Activated naive CD4-positive, alpha-beta T cell treated with anti-CD3 and anti-CD28 coated beads for 36 hours (primary cell): ENCODE measurements at regions of chr3 and their contacts with region 1.

Region 1: DNA sequence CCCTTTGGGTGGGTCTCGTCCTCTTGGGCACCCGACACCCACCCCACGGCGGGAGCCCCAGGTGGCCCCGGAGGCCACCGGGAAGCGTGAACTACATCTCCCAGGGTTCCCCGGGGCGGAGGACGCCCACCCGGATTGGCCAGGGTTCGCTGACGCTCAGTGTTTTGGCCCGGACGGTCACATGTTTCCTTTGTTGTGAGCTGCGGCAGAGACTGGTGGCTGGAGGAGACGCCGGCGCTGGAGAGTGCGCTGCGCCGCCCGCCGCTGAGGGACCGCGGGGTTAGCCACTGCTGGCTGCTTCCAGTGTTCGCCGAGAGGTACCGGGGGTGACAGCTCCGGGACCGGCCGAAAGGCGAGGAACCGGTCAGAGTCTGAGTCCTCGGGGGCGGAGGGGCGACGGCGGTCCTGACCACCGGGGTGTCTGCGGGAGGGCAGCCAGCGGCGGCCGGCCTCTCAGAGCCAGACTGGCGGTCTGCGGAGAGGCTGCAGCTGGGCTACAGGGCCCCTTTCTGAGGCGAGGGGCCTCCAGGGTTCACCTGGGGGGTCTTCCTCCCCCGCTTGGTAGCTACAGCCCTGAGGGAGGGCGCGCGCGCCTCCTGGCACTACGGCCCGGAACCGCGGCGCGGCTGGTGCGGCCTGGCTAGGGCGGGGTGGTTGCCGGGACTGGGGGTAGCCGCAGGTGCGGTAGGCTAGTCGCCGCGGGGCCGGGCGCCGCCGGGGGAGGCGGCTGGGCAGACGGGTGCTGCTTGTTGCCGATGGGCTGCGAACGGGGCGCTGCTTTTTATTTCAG is at the start of gene KLHL24:
- DNase-seq: peak; percentile 95
- H3K4me3 Mint-ChIP-seq: peak within 1 kb of the TSS; percentile 91
- H3K27ac Mint-ChIP-seq: peak within 1 kb of the TSS; percentile 93
- H3K4me1 Mint-ChIP-seq: peaks cover 40% of the 10 kb centered on the region
- H3K27me3 Mint-ChIP-seq: no peaks in the 10 kb centered on the region
- total RNA-seq, gene KLHL24: 26.2 to 26.9 TPM

Region 2: DNA sequence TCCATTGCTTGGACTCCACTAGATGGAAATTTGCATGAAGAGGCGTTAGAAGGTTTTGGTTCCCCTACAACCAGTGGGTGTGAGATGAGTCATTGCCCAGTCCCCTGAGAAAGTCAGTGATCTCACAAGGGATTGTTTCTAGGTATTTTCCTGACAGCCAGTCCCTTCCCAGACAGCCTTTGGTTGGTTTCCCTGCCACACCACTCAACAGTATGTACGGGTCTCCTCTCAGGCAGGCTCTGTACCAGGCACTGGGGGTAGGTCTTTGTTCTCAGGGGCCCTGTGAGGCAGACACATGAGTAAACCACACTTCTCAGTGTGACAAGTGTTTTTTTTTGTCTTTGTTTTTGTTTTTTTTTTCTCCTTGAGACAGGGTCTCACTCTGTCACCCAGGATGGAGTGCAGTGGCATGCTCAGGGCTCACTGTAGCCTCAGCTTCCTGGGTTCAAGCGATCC is 477.0 kb before region 1 on chr3:
- CTCF ChIA-PET with region 1: no interaction called
- intact Hi-C with region 1: loop called (anchors 5 kb)
- DNase-seq: peak; percentile 80
- H3K4me3 Mint-ChIP-seq: peak overlapping the region; percentile 19
- H3K27ac Mint-ChIP-seq: peak overlapping the region; percentile 74
- H3K4me1 Mint-ChIP-seq: peaks cover 41% of the 10 kb centered on the region
- H3K27me3 Mint-ChIP-seq: no peaks in the 10 kb centered on the region

Region 3: GRCh38 chr3:183427876-183428446 is 207.7 kb before region 1 on chr3:
- CTCF ChIA-PET with region 1: no interaction called
- intact Hi-C with region 1: loop called (anchors 1 kb)
- DNase-seq: peak; percentile 40
- H3K4me3 Mint-ChIP-seq: peak overlapping the region; percentile 79
- H3K27ac Mint-ChIP-seq: no peak overlapping the region
- H3K4me1 Mint-ChIP-seq: peaks cover 27% of the 10 kb centered on the region
- H3K27me3 Mint-ChIP-seq: peaks cover 14% of the 10 kb centered on the region

Region 4: DNA sequence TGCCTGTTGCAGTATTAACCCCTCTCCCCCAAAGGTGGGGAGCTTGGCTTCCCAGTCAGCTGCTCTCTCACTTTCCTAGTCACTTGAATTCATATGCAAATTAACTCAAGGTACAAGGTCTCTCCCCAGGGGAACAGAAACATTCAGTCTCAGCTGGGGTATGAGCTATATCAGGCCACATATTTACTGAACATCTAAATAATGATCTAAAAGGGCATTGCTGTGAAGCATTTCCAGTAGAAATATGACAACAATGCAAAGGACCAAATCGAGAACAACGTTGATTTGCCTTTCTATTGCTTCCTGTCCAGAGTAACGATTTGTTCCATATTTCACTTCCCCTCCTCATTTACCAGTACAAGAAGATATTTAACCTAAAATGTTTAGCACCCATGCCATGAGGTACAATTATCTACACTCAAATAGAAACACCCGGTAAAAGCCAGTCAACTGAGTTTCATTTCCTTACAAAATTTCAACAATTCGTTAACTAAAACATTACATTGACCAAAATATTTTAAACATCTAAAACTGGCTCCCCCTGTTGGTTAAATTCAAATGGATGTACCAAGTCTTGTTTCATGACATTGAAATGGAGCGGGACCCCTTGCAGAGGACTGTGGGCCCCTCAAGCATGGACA is 43.6 kb before region 1 on chr3:
- CTCF ChIA-PET with region 1: interaction called, 4 read pairs
- intact Hi-C with region 1: loop called (anchors 1 kb)
- DNase-seq: peak; percentile 19
- H3K4me3 Mint-ChIP-seq: peak overlapping the region; percentile 37
- H3K27ac Mint-ChIP-seq: peak overlapping the region; percentile 86
- H3K4me1 Mint-ChIP-seq: peaks cover 48% of the 10 kb centered on the region
- H3K27me3 Mint-ChIP-seq: no peaks in the 10 kb centered on the region

Region 5: DNA sequence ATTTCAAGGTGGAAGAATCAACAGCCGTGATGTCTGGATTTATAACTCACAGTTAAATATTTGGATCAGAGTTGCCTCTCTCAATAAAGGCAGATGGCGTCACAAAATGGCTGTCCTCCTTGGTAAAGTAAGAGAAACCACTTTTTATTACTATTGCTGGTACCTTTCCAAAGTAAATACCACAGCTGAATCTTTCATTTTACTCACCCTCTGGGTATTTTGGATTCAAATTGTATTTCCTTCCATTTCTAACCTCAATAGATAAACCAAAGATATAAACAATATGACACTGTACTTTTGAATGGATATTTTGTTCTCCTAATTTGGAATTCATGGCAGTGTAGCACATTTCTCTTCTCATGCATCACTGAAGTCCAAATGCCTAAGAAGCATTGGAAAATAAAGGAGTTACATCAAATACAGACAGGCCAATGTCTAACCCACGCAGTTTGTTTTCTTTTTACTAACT is 29.3 kb after region 1 on chr3:
- CTCF ChIA-PET with region 1: no interaction called
- intact Hi-C with region 1: no loop called
- DNase-seq: no peak
- H3K4me3 Mint-ChIP-seq: no peak overlapping the region
- H3K27ac Mint-ChIP-seq: no peak overlapping the region
- H3K4me1 Mint-ChIP-seq: peaks cover 14% of the 10 kb centered on the region
- H3K27me3 Mint-ChIP-seq: no peaks in the 10 kb centered on the region

Region 6: DNA sequence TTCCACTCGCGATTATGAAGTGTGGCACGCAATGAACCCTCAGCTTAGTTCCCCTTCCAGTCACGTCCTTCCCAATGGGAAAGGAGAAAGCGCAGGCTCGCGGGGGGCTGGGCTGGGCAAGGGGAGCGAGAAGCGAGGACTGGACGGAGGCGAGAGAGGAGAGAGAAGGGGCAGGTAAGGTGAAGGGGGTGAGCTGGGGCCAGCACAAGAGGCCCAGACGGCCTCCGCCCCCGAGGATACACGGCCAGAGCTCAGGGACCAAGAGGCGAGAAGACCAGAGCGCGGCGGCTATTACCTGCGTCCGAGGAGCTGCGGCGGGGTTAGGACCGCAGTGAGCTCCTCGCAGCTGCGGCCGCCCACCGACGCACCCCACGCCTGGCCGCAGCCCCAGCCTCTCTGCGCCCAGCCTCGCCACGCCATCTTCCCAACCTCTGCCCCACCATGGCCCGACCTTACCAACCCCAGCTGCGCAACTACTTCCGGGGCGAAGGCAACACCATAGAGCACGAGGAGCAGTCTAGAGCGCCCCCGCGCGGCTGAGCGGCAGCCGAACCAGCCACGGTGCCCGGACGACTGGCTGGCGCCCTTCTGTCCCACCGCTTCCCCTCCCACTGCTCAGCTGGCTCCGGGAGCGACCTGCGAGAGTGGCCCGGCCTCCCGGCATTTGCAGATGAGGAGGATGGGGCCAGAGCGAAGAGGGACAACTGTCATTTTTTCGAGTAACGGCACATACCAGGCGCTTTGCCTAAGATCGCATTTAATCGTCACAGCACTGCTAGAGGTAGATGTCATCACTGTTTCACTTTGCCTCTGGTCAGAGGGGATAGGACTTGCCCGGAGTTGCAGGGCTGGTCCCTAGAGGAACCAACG is 249.0 kb after region 1 on chr3 and contains the start of gene PARL:
- CTCF ChIA-PET with region 1: interaction called, 3 read pairs
- intact Hi-C with region 1: loop called (anchors 1 kb)
- DNase-seq: peak; percentile 98
- H3K4me3 Mint-ChIP-seq: peak within 1 kb of the TSS; percentile 94
- H3K27ac Mint-ChIP-seq: peak within 1 kb of the TSS; percentile 88
- H3K4me1 Mint-ChIP-seq: peaks cover 31% of the 10 kb centered on the region
- H3K27me3 Mint-ChIP-seq: no peaks in the 10 kb centered on the region
- total RNA-seq, gene PARL: 92.0 to 92.8 TPM

Region 7: DNA sequence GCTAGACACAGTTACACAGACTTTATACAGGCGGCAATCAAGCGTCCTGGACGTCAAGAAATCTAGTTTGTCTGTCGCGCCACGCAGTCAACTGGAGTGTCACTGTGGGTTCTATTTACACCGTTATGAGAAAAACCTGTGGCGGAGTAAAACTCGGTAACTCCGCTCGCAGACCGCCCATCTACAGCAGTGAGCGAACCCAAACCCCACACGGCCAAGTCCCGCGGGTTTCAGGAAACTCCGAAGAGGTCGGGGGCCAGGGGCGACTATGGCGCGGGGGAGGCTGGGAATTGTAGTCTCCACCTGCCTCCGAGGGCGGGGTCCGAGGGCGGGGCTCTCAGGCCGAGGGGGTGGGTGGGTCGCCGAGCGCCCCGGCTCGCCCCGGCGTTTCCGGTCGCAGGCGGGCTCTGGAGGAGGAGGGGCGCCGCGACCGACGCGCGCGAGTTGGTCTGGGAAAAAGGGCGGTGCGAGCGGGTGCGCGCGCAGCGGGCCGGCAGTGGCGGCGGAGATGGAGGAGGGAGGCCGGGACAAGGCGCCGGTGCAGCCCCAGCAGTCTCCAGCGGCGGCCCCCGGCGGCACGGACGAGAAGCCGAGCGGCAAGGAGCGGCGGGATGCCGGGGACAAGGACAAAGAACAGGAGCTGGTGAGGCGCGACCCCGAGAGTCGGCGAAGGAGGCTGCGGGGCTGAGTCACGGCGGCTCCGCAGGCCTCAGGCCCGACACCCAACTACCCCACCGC is 663.3 kb after region 1 on chr3 and contains the start of gene PSMD2:
- CTCF ChIA-PET with region 1: interaction called, 3 read pairs
- intact Hi-C with region 1: loop called (anchors 2 kb)
- DNase-seq: peak; percentile 99
- H3K4me3 Mint-ChIP-seq: peak within 1 kb of the TSS; percentile 98
- H3K27ac Mint-ChIP-seq: peak within 1 kb of the TSS; percentile 87
- H3K4me1 Mint-ChIP-seq: peaks cover 21% of the 10 kb centered on the region
- H3K27me3 Mint-ChIP-seq: no peaks in the 10 kb centered on the region
- total RNA-seq, gene PSMD2: 244 to 257 TPM